A673 (cell line): ENCODE measurements at regions of chr7 and their contacts with region 1.

Region 1: GRCh38 chr7:18345641-18346234 is 149.8 kb upstream of the HDAC9 start:
- DNase-seq: peak; percentile 75
- H3K4me3 ChIP-seq: no peak overlapping the region
- H3K27ac ChIP-seq: no peak overlapping the region
- H3K4me1 ChIP-seq: peaks cover 6% of the 10 kb centered on the region
- H3K27me3 ChIP-seq: no peaks in the 10 kb centered on the region
- CTCF ChIP-seq: peak; percentile 90

Region 2: DNA sequence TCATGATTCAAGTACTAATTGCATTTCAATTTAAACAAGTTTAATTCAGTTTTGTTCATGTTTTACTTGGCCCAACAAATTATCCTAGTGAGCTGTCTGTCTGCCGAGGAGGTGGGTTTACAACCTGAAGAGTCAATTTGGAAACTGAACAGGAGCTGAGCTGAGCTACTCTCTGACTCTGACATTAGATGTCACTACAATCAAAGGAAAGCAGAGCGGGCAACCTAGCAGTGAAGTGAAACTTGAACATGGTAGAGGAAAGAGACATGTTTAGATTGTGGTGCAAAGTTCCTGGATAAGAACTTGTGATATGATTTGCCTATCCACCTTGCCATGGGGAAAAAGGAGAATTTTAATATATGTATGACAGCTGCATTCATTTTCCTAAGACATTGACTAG is 1454.4 kb before region 1 on chr7:
- CTCF ChIA-PET with region 1: no interaction called
- POLR2A ChIA-PET with region 1: no interaction called
- intact Hi-C with region 1: loop called (anchors 10 kb)
- DNase-seq: peak; percentile 80
- H3K4me3 ChIP-seq: no peak overlapping the region
- H3K27ac ChIP-seq: no peak overlapping the region
- H3K4me1 ChIP-seq: no peaks in the 10 kb centered on the region
- H3K27me3 ChIP-seq: no peaks in the 10 kb centered on the region
- CTCF ChIP-seq: peak; percentile 76

Region 3: GRCh38 chr7:17298207-17298839 is 1047.4 kb before region 1 on chr7 and contains the start of gene AHR:
- CTCF ChIA-PET with region 1: no interaction called
- POLR2A ChIA-PET with region 1: no interaction called
- intact Hi-C with region 1: loop called (anchors 10 kb)
- DNase-seq: peak; percentile 95
- H3K4me3 ChIP-seq: peak within 1 kb of the TSS; percentile 76
- H3K27ac ChIP-seq: no peak within 1 kb of the TSS
- H3K4me1 ChIP-seq: peaks cover 17% of the 10 kb centered on the region
- H3K27me3 ChIP-seq: peaks cover 23% of the 10 kb centered on the region
- CTCF ChIP-seq: no peak
- total RNA-seq, gene AHR: 11.8 and 13.5 TPM in 2 replicates

Region 4: GRCh38 chr7:17706734-17707133 is 639.0 kb before region 1 on chr7:
- CTCF ChIA-PET with region 1: interaction called, 10 read pairs
- POLR2A ChIA-PET with region 1: no interaction called
- intact Hi-C with region 1: loop called (anchors 2 kb)
- DNase-seq: peak; percentile 78
- H3K4me3 ChIP-seq: no peak overlapping the region
- H3K27ac ChIP-seq: no peak overlapping the region
- H3K4me1 ChIP-seq: no peaks in the 10 kb centered on the region
- H3K27me3 ChIP-seq: peaks cover 12% of the 10 kb centered on the region
- CTCF ChIP-seq: peak; percentile 77

Region 5: DNA sequence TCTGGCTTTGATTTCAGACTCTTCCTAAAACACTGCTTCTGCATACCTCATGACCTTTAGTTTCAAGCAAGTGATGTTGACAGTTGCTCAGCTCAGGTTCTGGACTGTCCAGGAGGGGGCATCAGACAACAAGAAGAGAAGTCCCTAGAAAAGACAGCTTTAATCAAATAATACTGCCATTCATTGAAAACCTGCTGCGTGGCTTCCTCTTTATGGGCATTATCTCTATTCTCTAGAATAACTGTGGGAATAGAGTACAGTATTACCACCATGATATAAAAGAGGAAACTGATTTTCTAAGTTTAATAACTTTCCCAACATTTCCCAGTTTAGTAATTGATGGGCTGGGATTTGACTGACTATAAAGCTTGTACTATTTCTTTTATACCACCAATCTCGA is 575.8 kb before region 1 on chr7:
- CTCF ChIA-PET with region 1: interaction called, 15 read pairs
- POLR2A ChIA-PET with region 1: no interaction called
- intact Hi-C with region 1: loop called (anchors 2 kb)
- DNase-seq: peak; percentile 79
- H3K4me3 ChIP-seq: no peak overlapping the region
- H3K27ac ChIP-seq: no peak overlapping the region
- H3K4me1 ChIP-seq: no peaks in the 10 kb centered on the region
- H3K27me3 ChIP-seq: no peaks in the 10 kb centered on the region
- CTCF ChIP-seq: peak; percentile 87

Region 6: DNA sequence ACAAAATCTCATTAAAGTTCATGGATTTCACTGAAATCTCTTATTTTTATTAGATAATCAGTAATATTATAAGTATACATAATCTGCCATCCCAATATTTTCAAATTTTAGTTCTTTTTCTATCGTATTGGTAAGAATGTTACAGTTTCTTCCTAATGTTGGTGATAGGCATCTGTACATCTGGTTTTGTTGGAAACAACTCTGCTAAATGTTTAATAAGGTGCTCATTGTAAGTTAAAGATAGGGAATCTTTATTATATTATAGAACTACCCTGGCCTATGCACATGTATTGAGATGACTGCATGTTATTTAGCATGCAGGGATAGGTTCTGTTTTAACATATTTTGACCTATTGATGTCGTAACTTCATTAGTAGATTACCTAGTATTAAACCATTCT is 129.5 kb before region 1 on chr7:
- CTCF ChIA-PET with region 1: no interaction called
- POLR2A ChIA-PET with region 1: no interaction called
- intact Hi-C with region 1: loop called (anchors 5 kb)
- DNase-seq: no peak
- H3K4me3 ChIP-seq: no peak overlapping the region
- H3K27ac ChIP-seq: no peak overlapping the region
- H3K4me1 ChIP-seq: no peaks in the 10 kb centered on the region
- H3K27me3 ChIP-seq: no peaks in the 10 kb centered on the region
- CTCF ChIP-seq: no peak